CD8-positive, alpha-beta memory T cell (primary cell): ENCODE measurements at regions of chr1 and their contacts with region 1.

Region 1: GRCh38 chr1:151024540-151025146 is 11.7 kb upstream of the BNIPL start:
- DNase-seq: peak; percentile 77 to 90 (median 83)
- H3K4me3 ChIP-seq: no peak overlapping the region
- H3K4me3 Mint-ChIP-seq: peak overlapping the region in 3 of 7 donors; percentile 28 to 72 (median 43)
- H3K27ac ChIP-seq: no peak overlapping the region
- H3K27ac Mint-ChIP-seq: peak overlapping the region; percentile 11 to 90 (median 73)
- H3K4me1 ChIP-seq: peaks cover 7% of the 10 kb centered on the region
- H3K4me1 Mint-ChIP-seq: peaks cover 6 to 7% (median 7%) of the 10 kb centered on the region in 3 donors
- H3K27me3 ChIP-seq: no peaks in the 10 kb centered on the region
- H3K27me3 Mint-ChIP-seq: no peaks in the 10 kb centered on the region

Region 2: GRCh38 chr1:150696590-150697524 is 327.8 kb before region 1 on chr1 and contains the start of gene GOLPH3L:
- CTCF ChIA-PET with region 1: no interaction called
- POLR2A ChIA-PET with region 1: no interaction called
- DNase-seq: peak; percentile 77 to 94 (median 91)
- H3K4me3 ChIP-seq: peak within 1 kb of the TSS; percentile 83
- H3K4me3 Mint-ChIP-seq: peak within 1 kb of the TSS; percentile 94 to 100 (median 98)
- H3K27ac ChIP-seq: peak within 1 kb of the TSS; percentile 85
- H3K27ac Mint-ChIP-seq: peak within 1 kb of the TSS; percentile 84 to 99 (median 96)
- H3K4me1 ChIP-seq: peaks cover 10% of the 10 kb centered on the region
- H3K4me1 Mint-ChIP-seq: peaks cover 32 to 46% (median 45%) of the 10 kb centered on the region in 3 donors
- H3K27me3 ChIP-seq: no peaks in the 10 kb centered on the region
- H3K27me3 Mint-ChIP-seq: no peaks in the 10 kb centered on the region
- total RNA-seq, gene GOLPH3L: 18.1 to 20.0 TPM

Region 3: GRCh38 chr1:150987924-150988323 is 36.7 kb before region 1 on chr1:
- CTCF ChIA-PET with region 1: no interaction called
- POLR2A ChIA-PET with region 1: no interaction called
- DNase-seq: no peak
- H3K4me3 ChIP-seq: no peak overlapping the region
- H3K4me3 Mint-ChIP-seq: no peak overlapping the region
- H3K27ac ChIP-seq: no peak overlapping the region
- H3K27ac Mint-ChIP-seq: peak overlapping the region in 1 of 8 donors; percentile 20
- H3K4me1 ChIP-seq: no peaks in the 10 kb centered on the region
- H3K4me1 Mint-ChIP-seq: no peaks in the 10 kb centered on the region
- H3K27me3 ChIP-seq: no peaks in the 10 kb centered on the region
- H3K27me3 Mint-ChIP-seq: no peaks in the 10 kb centered on the region

Region 4: GRCh38 chr1:151039521-151039920 is 14.9 kb after region 1 on chr1:
- CTCF ChIA-PET with region 1: interaction called, 60 read pairs
- POLR2A ChIA-PET with region 1: interaction called, 3 read pairs
- DNase-seq: no peak
- H3K4me3 ChIP-seq: no peak overlapping the region
- H3K4me3 Mint-ChIP-seq: no peak overlapping the region
- H3K27ac ChIP-seq: no peak overlapping the region
- H3K27ac Mint-ChIP-seq: peak overlapping the region in 1 of 8 donors; percentile 15
- H3K4me1 ChIP-seq: peaks cover 8% of the 10 kb centered on the region
- H3K4me1 Mint-ChIP-seq: peaks cover 10 to 19% (median 12%) of the 10 kb centered on the region in 3 donors
- H3K27me3 ChIP-seq: no peaks in the 10 kb centered on the region
- H3K27me3 Mint-ChIP-seq: no peaks in the 10 kb centered on the region

Region 5: DNA sequence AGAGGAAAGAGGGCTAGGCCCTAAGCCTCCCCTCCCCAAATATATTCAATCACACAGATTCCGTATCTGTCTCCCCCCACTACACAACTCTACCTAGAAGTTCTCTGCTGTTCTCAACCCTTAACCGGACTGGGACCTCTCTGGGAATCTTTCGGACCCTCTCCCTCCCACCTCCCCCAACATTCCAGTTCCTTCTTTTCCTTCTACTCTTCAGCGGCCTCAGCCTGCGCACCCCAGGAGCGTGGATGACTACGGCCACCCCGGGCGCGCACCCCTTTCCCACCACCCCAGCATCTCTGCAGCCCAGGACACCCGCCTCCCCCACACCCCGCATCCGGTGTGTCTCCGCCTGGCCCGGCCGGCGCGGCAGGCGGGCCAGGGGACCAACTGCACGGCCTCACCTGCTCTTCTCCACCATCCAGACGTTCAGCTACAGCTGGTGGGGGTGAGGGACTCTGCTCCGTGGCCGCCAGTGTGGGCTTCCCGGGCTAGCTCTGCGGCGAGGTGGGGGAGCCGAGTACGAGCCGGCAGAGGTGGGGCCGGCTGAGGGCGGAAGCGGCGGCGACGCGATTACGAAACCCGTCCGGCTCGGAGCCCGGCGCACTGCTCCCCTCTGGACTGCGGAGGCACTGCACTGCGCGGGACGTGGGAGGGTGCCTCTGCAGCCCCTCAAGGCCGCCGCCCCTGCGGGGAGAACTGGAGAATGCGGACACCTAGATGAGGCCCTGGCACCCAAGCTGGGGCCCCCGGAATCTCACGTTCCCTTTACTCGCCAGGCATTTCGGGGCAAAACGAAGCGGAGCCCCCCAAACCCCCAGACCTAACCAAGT is 34.6 kb after region 1 on chr1 and contains the start of gene CDC42SE1:
- CTCF ChIA-PET with region 1: interaction called, 52 read pairs
- POLR2A ChIA-PET with region 1: interaction called, 6 read pairs
- DNase-seq: peak; percentile 78 to 90 (median 84)
- H3K4me3 ChIP-seq: peak within 1 kb of the TSS; percentile 92
- H3K4me3 Mint-ChIP-seq: peak within 1 kb of the TSS; percentile 95 to 100 (median 99)
- H3K27ac ChIP-seq: peak within 1 kb of the TSS; percentile 98
- H3K27ac Mint-ChIP-seq: peak within 1 kb of the TSS; percentile 94 to 99 (median 98)
- H3K4me1 ChIP-seq: peaks cover 17% of the 10 kb centered on the region
- H3K4me1 Mint-ChIP-seq: peaks cover 49 to 59% (median 59%) of the 10 kb centered on the region in 3 donors
- H3K27me3 ChIP-seq: no peaks in the 10 kb centered on the region
- H3K27me3 Mint-ChIP-seq: no peaks in the 10 kb centered on the region
- total RNA-seq, gene CDC42SE1: 201 to 213 TPM

Region 6: GRCh38 chr1:151085953-151086559 is 61.4 kb after region 1 on chr1:
- CTCF ChIA-PET with region 1: interaction called, 11 read pairs
- POLR2A ChIA-PET with region 1: no interaction called
- DNase-seq: no peak
- H3K4me3 ChIP-seq: no peak overlapping the region
- H3K4me3 Mint-ChIP-seq: no peak overlapping the region
- H3K27ac ChIP-seq: no peak overlapping the region
- H3K27ac Mint-ChIP-seq: peak overlapping the region in 1 of 8 donors; percentile 32
- H3K4me1 ChIP-seq: no peaks in the 10 kb centered on the region
- H3K4me1 Mint-ChIP-seq: no peaks in the 10 kb centered on the region
- H3K27me3 ChIP-seq: no peaks in the 10 kb centered on the region
- H3K27me3 Mint-ChIP-seq: no peaks in the 10 kb centered on the region

Region 7: GRCh38 chr1:151106894-151107293 is 82.3 kb after region 1 on chr1:
- CTCF ChIA-PET with region 1: interaction called, 33 read pairs
- POLR2A ChIA-PET with region 1: no interaction called
- DNase-seq: no peak
- H3K4me3 ChIP-seq: no peak overlapping the region
- H3K4me3 Mint-ChIP-seq: no peak overlapping the region
- H3K27ac ChIP-seq: no peak overlapping the region
- H3K27ac Mint-ChIP-seq: peak overlapping the region in 3 of 8 donors; percentile 11 to 35 (median 24)
- H3K4me1 ChIP-seq: no peaks in the 10 kb centered on the region
- H3K4me1 Mint-ChIP-seq: peaks cover 0 to 3% (median 1%) of the 10 kb centered on the region in 3 donors
- H3K27me3 ChIP-seq: no peaks in the 10 kb centered on the region
- H3K27me3 Mint-ChIP-seq: no peaks in the 10 kb centered on the region

Region 8: GRCh38 chr1:151156515-151156819 is 131.8 kb after region 1 on chr1 and contains the start of gene TNFAIP8L2:
- CTCF ChIA-PET with region 1: interaction called, 48 read pairs
- POLR2A ChIA-PET with region 1: interaction called, 8 read pairs
- DNase-seq: peak; percentile 51 to 78 (median 65)
- H3K4me3 ChIP-seq: peak within 1 kb of the TSS; percentile 87
- H3K4me3 Mint-ChIP-seq: peak within 1 kb of the TSS; percentile 97 to 100 (median 99)
- H3K27ac ChIP-seq: peak within 1 kb of the TSS; percentile 49
- H3K27ac Mint-ChIP-seq: peak within 1 kb of the TSS; percentile 82 to 98 (median 95)
- H3K4me1 ChIP-seq: peaks cover 39% of the 10 kb centered on the region
- H3K4me1 Mint-ChIP-seq: peaks cover 42 to 59% (median 52%) of the 10 kb centered on the region in 3 donors
- H3K27me3 ChIP-seq: no peaks in the 10 kb centered on the region
- H3K27me3 Mint-ChIP-seq: no peaks in the 10 kb centered on the region
- total RNA-seq, gene TNFAIP8L2: 24.6 to 25.5 TPM